ENCODE measurements at regions of chr9 and their contacts with region 1.

Region 1: DNA sequence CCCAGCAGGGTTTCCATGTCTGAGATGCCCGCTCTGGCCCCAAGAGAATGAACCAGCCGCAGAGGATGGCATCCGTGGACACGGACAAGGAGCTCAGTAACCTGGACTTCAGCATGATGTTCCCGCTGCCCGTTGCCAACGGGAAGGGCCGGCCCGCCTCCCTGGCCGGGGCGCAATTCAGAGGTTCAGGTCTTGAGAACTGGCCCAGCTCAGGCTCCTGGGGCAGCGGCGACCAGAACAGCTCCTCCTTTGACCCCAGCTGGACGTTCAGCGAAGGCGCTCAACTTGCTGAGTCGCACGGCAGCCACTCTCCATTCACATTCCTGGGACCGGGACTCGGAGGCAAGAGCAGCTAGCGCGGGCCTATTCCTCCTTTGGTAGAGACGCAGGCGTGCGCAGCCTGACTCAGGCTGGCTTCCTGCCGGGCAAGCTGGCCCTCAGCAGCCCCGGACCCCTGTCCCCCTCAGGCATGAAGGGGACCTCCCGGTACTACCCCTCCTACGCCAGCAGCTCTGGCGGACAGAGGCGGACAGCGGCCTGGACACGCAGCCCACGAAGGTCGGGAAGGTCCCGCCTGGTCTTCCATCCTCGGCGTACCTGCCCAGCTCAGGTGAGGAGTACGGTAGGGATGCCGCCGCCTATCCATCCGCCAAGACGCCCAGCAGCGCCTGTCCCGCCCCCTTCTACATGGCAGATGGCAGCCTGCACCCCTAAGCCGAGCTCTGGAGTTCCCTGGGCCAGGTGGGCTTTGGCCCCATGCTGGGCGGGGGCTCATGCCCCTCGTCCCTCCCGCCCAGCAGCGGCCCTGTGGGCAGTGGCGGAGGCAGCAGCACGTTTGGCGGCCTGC is 74.3 kb downstream of the INSL6 start:
- DNase-seq: no peak
- H3K4me3 ChIP-seq: no peak overlapping the region
- H3K4me3 Mint-ChIP-seq: no peak overlapping the region
- H3K27ac ChIP-seq: no peak overlapping the region
- H3K27ac Mint-ChIP-seq: peak overlapping the region in 1 of 7 donors; percentile 40
- H3K4me1 ChIP-seq: no peaks in the 10 kb centered on the region
- H3K4me1 Mint-ChIP-seq: no peaks in the 10 kb centered on the region
- H3K27me3 ChIP-seq: no peaks in the 10 kb centered on the region
- H3K27me3 Mint-ChIP-seq: peaks cover 0 to 1% (median 0%) of the 10 kb centered on the region in 3 donors
- CTCF ChIP-seq: no peak

Region 2: GRCh38 chr9:5052838-5053237 is 58.3 kb before region 1 on chr9:
- intact Hi-C with region 1: loop called in 1 of 2 experiments (anchors 10 kb)
- DNase-seq: no peak
- H3K4me3 ChIP-seq: no peak overlapping the region
- H3K4me3 Mint-ChIP-seq: no peak overlapping the region
- H3K27ac ChIP-seq: peak overlapping the region in 1 of 2 donors; percentile 21
- H3K27ac Mint-ChIP-seq: peak overlapping the region in 2 of 7 donors; percentile 46 to 58
- H3K4me1 ChIP-seq: no peaks in the 10 kb centered on the region
- H3K4me1 Mint-ChIP-seq: no peaks in the 10 kb centered on the region
- H3K27me3 ChIP-seq: no peaks in the 10 kb centered on the region
- H3K27me3 Mint-ChIP-seq: no peaks in the 10 kb centered on the region
- CTCF ChIP-seq: no peak